ENCODE measurements at regions of chr1 and their contacts with region 1.

Region 1: GRCh38 chr1:12184008-12184681 is 17.4 kb downstream of the TNFRSF1B start:
- DNase-seq: peak; percentile 88 to 93 (median 90)
- ATAC-seq: peak; percentile 84 to 89 (median 86)
- H3K4me3 ChIP-seq: peak overlapping the region in 11 of 12 donors; percentile 4 to 47 (median 31)
- H3K27ac ChIP-seq: peak overlapping the region; percentile 80 to 96 (median 92)
- H3K4me1 ChIP-seq: peaks cover 9 to 100% (median 59%) of the 10 kb centered on the region in 12 donors
- H3K27me3 ChIP-seq: no peaks in the 10 kb centered on the region
- CTCF ChIP-seq: peak; percentile 11 to 58 (median 39)
- POLR2A ChIP-seq: peak in 1 of 2 donors; percentile 36

Region 2: GRCh38 chr1:12132092-12132491 is 52.1 kb before region 1 on chr1:
- intact Hi-C with region 1: loop called in 1 of 10 experiments (anchors 10 kb)
- DNase-seq: no peak
- ATAC-seq: peak in 1 of 4 donors; percentile 26
- H3K4me3 ChIP-seq: no peak overlapping the region
- H3K27ac ChIP-seq: peak overlapping the region in 8 of 12 donors; percentile 33 to 88 (median 58)
- H3K4me1 ChIP-seq: peaks cover 0 to 55% (median 13%) of the 10 kb centered on the region in 12 donors
- H3K27me3 ChIP-seq: no peaks in the 10 kb centered on the region
- CTCF ChIP-seq: no peak
- POLR2A ChIP-seq: no peak

Region 3: DNA sequence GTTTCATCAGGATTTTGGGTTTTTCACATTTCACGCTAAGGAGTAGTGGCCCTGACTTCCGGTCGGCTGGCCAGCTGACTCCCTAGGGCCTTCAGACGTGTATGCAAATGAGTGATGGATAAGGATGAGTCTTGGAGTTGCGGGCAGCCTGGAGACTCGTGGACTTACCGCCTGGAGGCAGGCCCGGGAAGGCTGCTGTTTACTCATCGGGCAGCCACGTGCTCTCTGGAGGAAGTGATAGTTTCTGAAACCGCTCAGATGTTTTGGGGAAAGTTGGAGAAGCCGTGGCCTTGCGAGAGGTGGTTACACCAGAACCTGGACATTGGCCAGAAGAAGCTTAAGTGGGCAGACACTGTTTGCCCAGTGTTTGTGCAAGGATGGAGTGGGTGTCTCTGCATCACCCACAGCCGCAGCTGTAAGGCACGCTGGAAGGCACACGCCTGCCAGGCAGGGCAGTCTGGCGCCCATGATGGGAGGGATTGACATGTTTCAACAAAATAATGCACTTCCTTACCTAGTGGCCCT is 40.5 kb before region 1 on chr1:
- intact Hi-C with region 1: loop called in 5 of 10 experiments (anchors 1 to 10 kb)
- DNase-seq: peak; percentile 72 to 88 (median 86)
- ATAC-seq: peak; percentile 36 to 83 (median 80)
- H3K4me3 ChIP-seq: no peak overlapping the region
- H3K27ac ChIP-seq: peak overlapping the region in 11 of 12 donors; percentile 29 to 94 (median 54)
- H3K4me1 ChIP-seq: peaks cover 0 to 83% (median 34%) of the 10 kb centered on the region in 12 donors
- H3K27me3 ChIP-seq: no peaks in the 10 kb centered on the region
- CTCF ChIP-seq: peak in 3 of 12 donors; percentile 18 to 33 (median 26)
- POLR2A ChIP-seq: no peak

Region 4: GRCh38 chr1:12166834-12167492 is 17.2 kb before region 1 on chr1 and contains the start of gene TNFRSF1B:
- intact Hi-C with region 1: loop called in 1 of 10 experiments (anchors 2 kb)
- DNase-seq: peak; percentile 75 to 91 (median 83)
- ATAC-seq: peak; percentile 22 to 68 (median 61)
- H3K4me3 ChIP-seq: peak within 1 kb of the TSS; percentile 71 to 99 (median 86)
- H3K27ac ChIP-seq: peak within 1 kb of the TSS; percentile 86 to 96 (median 94)
- H3K4me1 ChIP-seq: peaks cover 8 to 82% (median 37%) of the 10 kb centered on the region in 12 donors
- H3K27me3 ChIP-seq: peaks cover 0 to 8% (median 0%) of the 10 kb centered on the region in 9 donors
- CTCF ChIP-seq: no peak
- POLR2A ChIP-seq: peak in 1 of 2 donors; percentile 97
- total RNA-seq, gene TNFRSF1B: 11.2 to 71.0 (median 16.6) TPM

Region 5: DNA sequence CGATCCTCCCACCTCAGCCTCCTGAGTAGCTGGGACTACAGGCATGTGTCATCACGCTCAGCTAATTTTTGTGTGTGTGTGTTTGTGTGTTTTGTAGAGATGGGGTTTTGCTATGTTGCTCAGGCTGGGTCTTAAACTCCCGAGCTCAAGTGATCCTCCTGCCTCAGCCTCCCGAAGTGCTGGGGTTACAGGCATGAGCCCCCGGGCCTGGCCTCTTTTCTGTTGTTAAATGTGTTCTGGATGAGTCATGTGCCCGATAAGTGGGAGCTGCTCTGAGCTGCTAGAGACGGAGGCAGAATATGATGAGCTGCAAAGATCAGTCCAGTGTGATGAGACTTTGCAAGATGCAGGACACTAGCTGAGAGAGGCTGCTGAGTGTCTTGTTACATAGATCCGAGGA is 121.2 kb after region 1 on chr1:
- intact Hi-C with region 1: no loop called
- DNase-seq: no peak
- ATAC-seq: no peak
- H3K4me3 ChIP-seq: no peak overlapping the region
- H3K27ac ChIP-seq: no peak overlapping the region
- H3K4me1 ChIP-seq: peaks cover 0 to 31% (median 17%) of the 10 kb centered on the region in 12 donors
- H3K27me3 ChIP-seq: no peaks in the 10 kb centered on the region
- CTCF ChIP-seq: no peak
- POLR2A ChIP-seq: no peak